ENCODE measurements at regions of chr17 and their contacts with region 1.

Region 1: GRCh38 chr17:41101586-41102259 is at the start of gene KRTAP4-16:
- DNase-seq: no peak
- H3K4me3 ChIP-seq: no peak within 1 kb of the TSS
- H3K27ac ChIP-seq: no peak within 1 kb of the TSS
- H3K4me1 ChIP-seq: no peaks in the 10 kb centered on the region
- H3K27me3 ChIP-seq: no peaks in the 10 kb centered on the region
- CTCF ChIP-seq: no peak
- EP300 ChIP-seq: no peak
- POLR2A ChIP-seq: no peak
- total RNA-seq, gene KRTAP4-16: not detected

Region 2: DNA sequence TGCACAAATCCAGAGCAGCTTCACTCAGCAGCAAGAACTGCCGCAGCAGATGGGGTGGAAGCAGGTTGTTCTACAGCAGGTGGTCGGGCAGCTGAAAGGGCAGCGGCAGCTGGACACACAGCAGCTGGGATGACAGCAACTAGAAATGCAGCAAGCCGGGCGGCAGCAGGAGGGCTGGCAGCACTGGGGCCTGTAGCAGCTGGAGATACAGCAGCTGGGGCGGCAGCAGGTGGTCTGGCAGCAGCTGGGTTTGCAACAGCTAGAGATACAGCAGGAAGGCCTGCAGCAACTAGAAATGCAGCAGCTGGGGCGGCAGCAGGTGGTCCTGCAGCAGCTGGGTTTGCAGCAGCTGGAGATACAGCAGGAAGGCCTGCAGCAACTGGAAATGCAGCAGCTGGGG is 65.8 kb after region 1 on chr17:
- intact Hi-C with region 1: loop called in 1 of 4 experiments (anchors 5 kb)
- DNase-seq: no peak
- H3K4me3 ChIP-seq: no peak overlapping the region
- H3K27ac ChIP-seq: no peak overlapping the region
- H3K4me1 ChIP-seq: no peaks in the 10 kb centered on the region
- H3K27me3 ChIP-seq: no peaks in the 10 kb centered on the region
- CTCF ChIP-seq: no peak
- EP300 ChIP-seq: no peak
- POLR2A ChIP-seq: no peak

Measured in ovary (tissue), 10 donors.